ENCODE measurements at regions of chr14 and their contacts with region 1.

Region 1: DNA sequence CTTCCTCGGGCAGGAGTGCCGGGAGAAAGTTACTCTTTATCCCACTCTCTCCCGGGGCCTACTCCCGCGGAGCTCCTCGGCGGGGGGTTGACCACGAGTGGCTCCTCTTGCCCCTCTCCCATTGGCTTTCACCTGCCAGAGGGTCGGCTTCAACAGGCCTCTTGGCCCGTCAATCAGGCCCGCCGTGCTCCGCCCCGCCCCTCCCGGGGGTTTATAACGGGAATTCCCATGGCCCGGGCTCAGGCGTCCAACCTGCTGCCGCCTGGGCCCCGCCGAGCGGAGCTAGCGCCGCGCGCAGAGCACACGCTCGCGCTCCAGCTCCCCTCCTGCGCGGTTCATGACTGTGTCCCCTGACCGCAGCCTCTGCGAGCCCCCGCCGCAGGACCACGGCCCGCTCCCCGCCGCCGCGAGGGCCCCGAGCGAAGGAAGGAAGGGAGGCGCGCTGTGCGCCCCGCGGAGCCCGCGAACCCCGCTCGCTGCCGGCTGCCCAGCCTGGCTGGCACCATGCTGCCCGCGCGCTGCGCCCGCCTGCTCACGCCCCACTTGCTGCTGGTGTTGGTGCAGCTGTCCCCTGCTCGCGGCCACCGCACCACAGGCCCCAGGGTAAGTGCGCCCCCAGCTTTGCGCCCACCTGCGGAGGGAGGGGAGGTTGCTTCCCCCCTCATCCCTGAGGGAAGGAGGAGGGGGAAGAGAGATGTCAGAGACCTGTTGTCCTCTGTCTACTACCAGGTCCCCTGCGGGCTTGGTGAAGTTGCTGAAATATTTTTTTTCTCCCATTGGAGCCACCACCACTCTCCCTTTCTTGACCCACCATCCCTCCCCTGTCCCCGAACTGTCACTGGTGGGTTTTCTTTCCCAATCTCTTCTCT is at the start of gene SMOC1:
- DNase-seq: peak; percentile 57
- H3K4me3 ChIP-seq: peak within 1 kb of the TSS in 1 of 3 experiments; percentile 12
- H3K27ac ChIP-seq: no peak within 1 kb of the TSS
- H3K4me1 ChIP-seq: no peaks in the 10 kb centered on the region
- H3K27me3 ChIP-seq: peaks cover 34% of the 10 kb centered on the region in 2 experiments
- CTCF ChIP-seq: no peak
- POLR2A ChIP-seq: no peak
- total RNA-seq, gene SMOC1: 0.78 and 0.97 TPM in 2 replicates

Region 2: GRCh38 chr14:69863083-69863482 is 16.3 kb before region 1 on chr14:
- CTCF ChIA-PET with region 1: no interaction called
- POLR2A ChIA-PET with region 1: no interaction called
- dilution Hi-C with region 1: no loop called
- intact Hi-C with region 1: no loop called
- DNase-seq: no peak
- H3K4me3 ChIP-seq: no peak overlapping the region
- H3K27ac ChIP-seq: no peak overlapping the region
- H3K4me1 ChIP-seq: no peaks in the 10 kb centered on the region
- H3K27me3 ChIP-seq: no peaks in the 10 kb centered on the region
- CTCF ChIP-seq: no peak
- POLR2A ChIP-seq: no peak

Region 3: GRCh38 chr14:70013269-70013873 is 134.0 kb after region 1 on chr14:
- CTCF ChIA-PET with region 1: interaction called, 15 read pairs
- POLR2A ChIA-PET with region 1: no interaction called
- dilution Hi-C with region 1: no loop called
- intact Hi-C with region 1: loop called (anchors 1 kb)
- DNase-seq: peak; percentile 34
- H3K4me3 ChIP-seq: no peak overlapping the region
- H3K27ac ChIP-seq: no peak overlapping the region
- H3K4me1 ChIP-seq: no peaks in the 10 kb centered on the region
- H3K27me3 ChIP-seq: no peaks in the 10 kb centered on the region
- CTCF ChIP-seq: peak; percentile 78 to 80
- POLR2A ChIP-seq: no peak

Region 4: DNA sequence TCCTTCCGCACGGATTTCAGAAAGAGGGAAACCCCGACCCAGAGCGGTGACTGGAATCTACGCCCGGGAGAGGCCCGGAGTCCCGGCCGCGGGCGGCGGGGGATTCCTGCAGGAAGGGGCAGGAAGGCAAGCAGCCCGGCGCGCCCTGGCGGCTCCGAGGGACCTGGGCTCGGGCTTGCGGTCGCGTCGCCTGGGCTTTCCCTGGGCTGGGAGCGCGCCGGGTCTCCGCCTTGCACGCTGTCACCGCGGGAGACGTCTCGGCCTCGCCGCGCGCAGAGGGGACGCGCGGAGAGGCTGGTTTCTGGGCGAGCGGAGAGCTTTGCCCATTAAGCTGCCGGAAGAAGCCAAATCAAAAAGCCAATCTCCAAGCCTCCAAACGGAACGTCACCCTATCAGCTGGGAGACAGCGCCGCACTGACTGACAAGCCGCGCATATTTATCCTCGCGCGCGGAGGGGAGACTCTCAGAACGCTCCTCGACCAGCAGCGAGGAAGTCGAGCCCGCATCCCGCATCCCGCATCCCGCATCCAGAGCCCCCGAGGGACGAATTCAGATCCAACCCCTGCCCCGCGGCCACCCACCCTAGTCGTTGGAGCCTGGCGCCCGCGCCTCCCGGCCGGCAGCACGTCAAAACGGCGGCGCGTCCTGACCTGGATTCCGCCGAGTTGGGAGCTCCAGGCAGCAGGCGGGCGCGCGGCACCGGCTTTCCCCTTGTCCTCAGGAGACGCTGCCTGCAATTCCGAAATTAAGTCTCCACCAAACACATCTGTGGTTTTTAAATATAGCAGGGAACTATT is 309.4 kb after region 1 on chr14 and contains the start of gene SLC8A3:
- CTCF ChIA-PET with region 1: no interaction called
- POLR2A ChIA-PET with region 1: no interaction called
- dilution Hi-C with region 1: no loop called
- intact Hi-C with region 1: no loop called
- DNase-seq: peak; percentile 35
- H3K4me3 ChIP-seq: peak within 1 kb of the TSS; percentile 37 to 59 (median 51)
- H3K27ac ChIP-seq: no peak within 1 kb of the TSS
- H3K4me1 ChIP-seq: peaks cover 19% of the 10 kb centered on the region
- H3K27me3 ChIP-seq: peaks cover 18 to 30% of the 10 kb centered on the region in 2 experiments
- CTCF ChIP-seq: no peak
- POLR2A ChIP-seq: no peak
- total RNA-seq, gene SLC8A3: not detected in 2 replicates